Aorta (tissue), 5 donors: ENCODE measurements at regions of chr4 and their contacts with region 1.

Region 1: DNA sequence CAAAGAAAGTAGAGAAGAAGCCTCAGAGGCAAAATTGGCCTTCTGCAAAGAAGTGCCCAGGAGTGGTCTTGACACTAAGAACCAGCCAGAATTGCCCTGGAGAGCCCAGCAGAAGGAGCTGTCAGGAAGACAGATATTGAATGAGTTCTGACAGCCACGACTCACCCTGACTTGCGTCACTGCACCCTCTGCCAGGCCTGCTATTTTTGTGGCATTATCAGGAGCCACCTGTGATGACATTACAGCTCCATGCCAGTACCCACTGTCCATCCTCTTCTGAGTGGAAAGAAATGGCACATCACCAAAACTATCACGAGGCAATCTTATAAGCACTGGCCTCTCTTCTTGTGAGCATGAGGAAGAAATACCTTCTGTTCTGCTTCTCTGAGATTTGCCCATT is 67.7 kb downstream of the SMIM20 start:
- DNase-seq: no peak
- ATAC-seq: no peak
- H3K4me3 ChIP-seq: no peak overlapping the region
- H3K27ac ChIP-seq: no peak overlapping the region
- H3K4me1 ChIP-seq: no peaks in the 10 kb centered on the region
- H3K27me3 ChIP-seq: no peaks in the 10 kb centered on the region

Region 2: GRCh38 chr4:26081795-26082498 is 100.2 kb after region 1 on chr4:
- intact Hi-C with region 1: loop called in 1 of 2 experiments (anchors 10 kb)
- DNase-seq: no peak
- ATAC-seq: no peak
- H3K4me3 ChIP-seq: no peak overlapping the region
- H3K27ac ChIP-seq: no peak overlapping the region
- H3K4me1 ChIP-seq: no peaks in the 10 kb centered on the region
- H3K27me3 ChIP-seq: no peaks in the 10 kb centered on the region

Region 3: GRCh38 chr4:27000820-27001219 is 1019.1 kb after region 1 on chr4:
- intact Hi-C with region 1: loop called in 1 of 2 experiments (anchors 10 kb)
- DNase-seq: no peak
- ATAC-seq: no peak
- H3K4me3 ChIP-seq: no peak overlapping the region
- H3K27ac ChIP-seq: no peak overlapping the region
- H3K4me1 ChIP-seq: peaks cover 0 to 2% of the 10 kb centered on the region in 2 donors
- H3K27me3 ChIP-seq: no peaks in the 10 kb centered on the region